Natural killer cell (primary cell): ENCODE measurements at regions of chr2 and their contacts with region 1.

Region 1: GRCh38 chr2:12057436-12058166 is 311.2 kb downstream of the LPIN1 start:
- DNase-seq: peak; percentile 55 to 76
- ATAC-seq: peak; percentile 89 to 93 (median 89)
- H3K4me3 ChIP-seq: no peak overlapping the region
- H3K4me3 Mint-ChIP-seq: peak overlapping the region; percentile 99
- H3K27ac ChIP-seq: peak overlapping the region; percentile 55
- H3K27ac Mint-ChIP-seq: peak overlapping the region; percentile 85 to 87
- H3K4me1 ChIP-seq: peaks cover 41% of the 10 kb centered on the region
- H3K4me1 Mint-ChIP-seq: peaks cover 90 to 92% of the 10 kb centered on the region in 2 donors
- H3K27me3 ChIP-seq: peaks cover 4% of the 10 kb centered on the region
- H3K27me3 Mint-ChIP-seq: peaks cover 0 to 22% of the 10 kb centered on the region in 2 donors
- CTCF ChIP-seq: no peak

Region 2: DNA sequence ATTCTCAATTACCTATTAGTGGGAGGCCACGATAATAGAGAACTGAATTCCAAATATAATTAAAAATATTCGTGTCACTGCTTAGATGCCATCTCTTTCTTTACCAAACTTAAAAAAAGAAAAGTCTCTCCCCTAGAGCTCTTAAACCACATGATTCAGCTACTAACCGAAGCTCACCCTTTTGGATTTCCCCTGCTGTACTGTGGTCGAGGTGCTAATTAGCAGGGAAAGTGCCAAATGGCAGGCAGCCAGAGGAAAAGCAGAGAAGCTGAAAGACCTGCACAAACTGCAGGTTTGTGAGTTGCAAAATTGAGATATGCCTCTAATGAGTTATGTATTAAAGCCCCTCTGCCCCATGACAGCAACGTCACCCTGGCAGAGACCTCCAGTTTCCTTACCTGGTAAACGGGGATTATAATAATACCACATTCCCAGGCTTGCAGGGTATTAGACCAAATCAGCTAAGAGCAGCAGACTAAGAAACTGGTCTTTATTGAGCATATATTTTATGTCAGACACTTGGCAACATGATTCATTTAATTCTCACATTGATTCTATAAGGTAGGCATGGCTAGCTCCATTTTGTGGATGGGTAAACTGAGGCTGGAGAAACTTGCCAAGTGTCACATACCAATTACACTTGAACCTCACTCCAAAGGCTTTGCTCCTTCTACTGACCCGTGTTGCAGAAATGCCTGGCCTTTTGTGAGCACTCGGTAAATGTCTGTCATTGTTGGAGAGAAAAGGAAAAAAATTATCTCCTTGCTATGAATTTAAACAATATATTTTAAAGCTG is 51.5 kb before region 1 on chr2:
- intact Hi-C with region 1: loop called (anchors 2 kb)
- DNase-seq: peak; percentile 81 to 91
- ATAC-seq: peak; percentile 86 to 98 (median 87)
- H3K4me3 ChIP-seq: no peak overlapping the region
- H3K4me3 Mint-ChIP-seq: peak overlapping the region; percentile 55
- H3K27ac ChIP-seq: no peak overlapping the region
- H3K27ac Mint-ChIP-seq: peak overlapping the region; percentile 50 to 81
- H3K4me1 ChIP-seq: peaks cover 19% of the 10 kb centered on the region
- H3K4me1 Mint-ChIP-seq: peaks cover 50 to 59% of the 10 kb centered on the region in 2 donors
- H3K27me3 ChIP-seq: peaks cover 67% of the 10 kb centered on the region
- H3K27me3 Mint-ChIP-seq: peaks cover 74 to 94% of the 10 kb centered on the region in 2 donors
- CTCF ChIP-seq: no peak

Region 3: GRCh38 chr2:12162269-12163247 is 105.0 kb after region 1 on chr2:
- intact Hi-C with region 1: no loop called
- DNase-seq: no peak
- ATAC-seq: no peak
- H3K4me3 ChIP-seq: no peak overlapping the region
- H3K4me3 Mint-ChIP-seq: no peak overlapping the region
- H3K27ac ChIP-seq: no peak overlapping the region
- H3K27ac Mint-ChIP-seq: no peak overlapping the region
- H3K4me1 ChIP-seq: no peaks in the 10 kb centered on the region
- H3K4me1 Mint-ChIP-seq: peaks cover 11 to 13% of the 10 kb centered on the region in 2 donors
- H3K27me3 ChIP-seq: no peaks in the 10 kb centered on the region
- H3K27me3 Mint-ChIP-seq: peaks cover 11 to 24% of the 10 kb centered on the region in 2 donors
- CTCF ChIP-seq: no peak

Region 4: DNA sequence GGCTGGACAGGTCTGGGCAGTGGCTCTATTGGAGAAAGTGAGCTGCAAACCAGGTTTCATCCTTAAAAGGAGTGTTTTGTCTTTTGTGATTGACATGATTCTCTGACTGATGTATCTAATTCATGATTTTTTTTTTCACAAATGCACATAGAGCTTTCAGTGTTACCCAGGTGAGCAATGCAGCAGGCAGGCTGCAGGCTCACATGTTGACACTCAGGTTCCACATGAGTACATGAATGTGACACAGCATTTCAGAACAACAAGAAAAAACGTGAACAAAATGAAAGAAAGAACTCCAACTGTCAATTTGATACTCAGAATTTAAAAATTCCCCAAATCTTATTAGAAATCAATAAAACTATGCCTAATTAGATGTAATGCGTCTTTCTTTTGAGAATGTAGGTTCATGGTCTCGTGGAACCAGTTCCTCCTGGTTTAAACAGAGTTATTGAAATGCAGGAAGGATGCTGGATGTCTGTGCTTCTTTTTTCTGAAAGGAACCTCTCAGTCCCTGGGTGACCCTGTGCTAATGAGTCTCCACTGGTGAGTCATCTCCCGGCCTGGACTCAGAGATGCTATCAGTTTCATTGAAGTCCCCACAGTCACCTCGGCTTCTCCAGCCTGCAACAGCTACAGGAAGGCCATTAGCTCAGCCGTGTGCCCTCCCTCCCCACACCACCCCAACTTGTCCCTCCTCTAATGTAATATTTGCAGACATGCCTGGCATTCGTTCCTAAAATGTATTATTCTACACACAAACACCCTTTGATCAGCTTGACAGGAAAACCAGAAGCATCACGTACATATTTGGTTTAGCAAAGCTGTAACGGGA is 119.2 kb after region 1 on chr2:
- intact Hi-C with region 1: loop called (anchors 5 kb)
- DNase-seq: peak in 1 of 2 donors; percentile 29
- ATAC-seq: peak; percentile 70 to 82 (median 78)
- H3K4me3 ChIP-seq: no peak overlapping the region
- H3K4me3 Mint-ChIP-seq: peak overlapping the region; percentile 53
- H3K27ac ChIP-seq: no peak overlapping the region
- H3K27ac Mint-ChIP-seq: peak overlapping the region; percentile 68 to 69
- H3K4me1 ChIP-seq: peaks cover 20% of the 10 kb centered on the region
- H3K4me1 Mint-ChIP-seq: peaks cover 27 to 34% of the 10 kb centered on the region in 2 donors
- H3K27me3 ChIP-seq: no peaks in the 10 kb centered on the region
- H3K27me3 Mint-ChIP-seq: peaks cover 8 to 21% of the 10 kb centered on the region in 2 donors
- CTCF ChIP-seq: no peak

Region 5: DNA sequence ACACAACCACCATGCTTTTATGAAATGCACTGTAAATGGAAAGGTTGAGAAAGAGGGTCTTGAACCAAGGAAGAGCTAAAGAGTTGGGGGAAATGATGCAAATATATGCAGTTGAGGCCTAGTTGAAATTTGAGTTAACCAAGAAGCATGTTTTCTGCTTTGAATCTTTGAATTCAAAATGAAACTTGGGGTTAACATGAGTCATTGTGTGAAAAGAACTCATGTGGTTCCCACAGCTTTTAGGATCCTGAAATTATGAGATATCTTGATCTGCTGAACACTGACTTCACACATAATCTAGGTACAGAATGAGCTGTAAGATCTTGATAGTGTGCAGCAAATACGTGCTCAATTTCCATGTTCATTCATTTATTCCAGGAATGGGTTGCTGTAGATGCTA is 236.3 kb after region 1 on chr2:
- intact Hi-C with region 1: loop called (anchors 10 kb)
- DNase-seq: no peak
- ATAC-seq: peak; percentile 73 to 81 (median 75)
- H3K4me3 ChIP-seq: no peak overlapping the region
- H3K4me3 Mint-ChIP-seq: peak overlapping the region; percentile 26
- H3K27ac ChIP-seq: no peak overlapping the region
- H3K27ac Mint-ChIP-seq: peak overlapping the region in 1 of 2 donors; percentile 14
- H3K4me1 ChIP-seq: peaks cover 2% of the 10 kb centered on the region
- H3K4me1 Mint-ChIP-seq: peaks cover 22 to 27% of the 10 kb centered on the region in 2 donors
- H3K27me3 ChIP-seq: peaks cover 3% of the 10 kb centered on the region
- H3K27me3 Mint-ChIP-seq: peaks cover 7 to 30% of the 10 kb centered on the region in 2 donors
- CTCF ChIP-seq: no peak

Region 6: DNA sequence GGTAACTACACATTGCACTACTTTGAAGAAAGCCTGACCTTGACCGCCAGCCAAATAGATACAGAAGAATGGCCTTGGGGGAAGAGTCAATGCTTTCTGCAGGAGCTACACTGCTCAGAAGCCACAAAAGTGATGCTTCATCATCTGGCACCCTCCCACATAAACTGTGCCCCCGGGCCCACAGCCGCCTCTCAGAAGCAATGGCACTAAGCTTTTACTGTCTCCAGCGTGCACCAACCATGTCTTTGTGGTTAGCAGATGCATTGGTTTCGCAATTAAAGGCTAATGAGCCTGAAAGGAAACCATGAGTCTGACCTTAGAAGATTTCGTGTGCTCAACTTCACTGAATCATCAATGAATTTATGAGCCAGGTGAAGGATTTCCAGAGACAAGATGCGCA is 449.7 kb after region 1 on chr2:
- intact Hi-C with region 1: loop called (anchors 10 kb)
- DNase-seq: peak; percentile 29 to 66
- ATAC-seq: peak; percentile 87 to 94 (median 91)
- H3K4me3 ChIP-seq: no peak overlapping the region
- H3K4me3 Mint-ChIP-seq: peak overlapping the region; percentile 35
- H3K27ac ChIP-seq: peak overlapping the region; percentile 12
- H3K27ac Mint-ChIP-seq: peak overlapping the region; percentile 45 to 67
- H3K4me1 ChIP-seq: peaks cover 37% of the 10 kb centered on the region
- H3K4me1 Mint-ChIP-seq: peaks cover 54 to 72% of the 10 kb centered on the region in 2 donors
- H3K27me3 ChIP-seq: no peaks in the 10 kb centered on the region
- H3K27me3 Mint-ChIP-seq: no peaks in the 10 kb centered on the region
- CTCF ChIP-seq: no peak